Colonic mucosa (tissue), 4 donors: ENCODE measurements at regions of chr17 and their contacts with region 1.

Region 1: GRCh38 chr17:7296189-7296902 is 1.9 kb upstream of the YBX2 start:
- DNase-seq: peak; percentile 83
- H3K4me3 ChIP-seq: peak overlapping the region; percentile 6
- H3K27ac ChIP-seq: no peak overlapping the region
- H3K4me1 ChIP-seq: peaks cover 16% of the 10 kb centered on the region
- H3K27me3 ChIP-seq: peaks cover 4% of the 10 kb centered on the region
- CTCF ChIP-seq: peak; percentile 90

Region 2: DNA sequence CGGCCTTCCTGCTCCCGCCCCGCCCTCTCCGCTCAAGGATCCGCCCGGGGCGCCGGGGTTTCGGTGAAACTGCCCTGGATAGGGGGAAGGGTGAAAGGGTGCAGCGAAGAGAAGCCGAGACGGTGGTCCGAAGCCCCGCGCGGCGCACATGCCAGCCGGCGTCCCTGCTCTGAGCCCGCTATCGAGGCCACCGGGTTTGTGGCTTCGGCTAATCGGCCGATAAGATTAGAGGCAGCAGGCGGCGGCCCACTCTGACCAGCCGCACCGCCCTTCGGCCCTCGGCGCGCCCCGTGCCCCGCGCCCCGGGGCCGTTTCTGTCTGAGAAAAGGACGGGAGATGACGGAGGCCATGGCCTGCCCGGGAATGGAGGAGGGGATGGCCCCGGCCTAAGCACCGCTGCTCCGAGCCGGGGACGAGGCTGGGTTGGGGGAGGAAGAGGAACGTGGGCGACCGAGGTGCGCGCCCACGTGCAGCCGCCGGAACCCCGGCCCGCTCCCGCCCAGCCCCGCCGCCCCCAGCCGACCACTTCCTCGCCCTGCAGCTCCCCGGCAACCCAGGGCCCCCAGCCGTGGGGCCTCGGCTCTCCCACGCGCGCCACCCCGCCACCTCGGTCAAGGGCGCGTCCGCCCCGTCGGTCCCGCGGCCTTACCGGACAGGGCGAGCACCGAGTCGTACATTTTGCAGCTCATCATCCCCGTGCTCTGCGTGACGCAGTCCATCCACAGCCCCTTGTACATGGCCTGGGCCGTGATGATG is 35.0 kb before region 1 on chr17:
- intact Hi-C with region 1: loop called (anchors 5 kb)
- DNase-seq: peak; percentile 86
- H3K4me3 ChIP-seq: peak overlapping the region; percentile 77
- H3K27ac ChIP-seq: peak overlapping the region; percentile 93
- H3K4me1 ChIP-seq: no peaks in the 10 kb centered on the region
- H3K27me3 ChIP-seq: no peaks in the 10 kb centered on the region
- CTCF ChIP-seq: no peak

Region 3: DNA sequence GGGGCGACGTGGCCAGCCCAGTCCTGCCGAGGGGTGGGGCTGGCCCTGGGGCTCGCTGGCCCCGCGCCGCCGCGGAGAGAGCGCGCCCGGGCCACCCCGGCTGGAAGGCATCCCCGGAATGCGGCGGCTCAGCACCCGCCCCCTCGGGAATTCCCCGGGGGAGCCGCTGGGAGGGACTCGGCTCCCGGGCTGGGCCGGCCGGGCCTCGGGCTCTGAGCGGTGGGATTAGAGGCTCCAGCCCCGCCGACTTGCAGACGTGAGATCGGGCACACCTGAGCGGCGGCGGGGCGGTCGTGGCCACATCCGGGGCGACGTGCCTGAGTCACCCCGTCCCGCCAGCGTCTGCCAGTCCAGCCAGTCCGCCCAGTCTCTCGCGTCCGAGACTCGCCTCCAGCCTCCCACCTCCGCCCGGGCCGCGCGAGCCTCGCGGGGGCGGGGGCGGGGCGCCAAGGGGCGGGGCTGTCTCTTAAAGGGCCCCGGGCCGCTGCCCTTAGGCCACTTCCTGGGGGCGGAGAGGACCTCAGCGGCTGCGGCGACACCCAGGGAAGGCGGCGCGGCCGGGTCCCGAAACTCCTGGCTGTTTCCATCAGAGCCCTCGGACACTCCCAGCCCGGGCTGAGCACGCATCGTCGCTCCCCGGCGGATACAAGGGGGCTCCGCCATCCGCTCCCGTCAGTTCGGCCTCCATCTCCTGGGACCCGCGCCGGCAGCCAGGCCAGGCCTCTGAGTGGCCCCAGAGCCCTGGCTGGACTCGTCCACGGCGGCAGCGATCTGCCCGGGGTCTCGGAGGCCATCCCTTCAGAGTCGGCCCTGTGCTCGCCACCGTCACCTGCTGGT is 55.5 kb after region 1 on chr17 and contains the start of gene KCTD11:
- intact Hi-C with region 1: no loop called
- DNase-seq: peak; percentile 94
- H3K4me3 ChIP-seq: peak within 1 kb of the TSS; percentile 79
- H3K27ac ChIP-seq: peak within 1 kb of the TSS; percentile 99
- H3K4me1 ChIP-seq: peaks cover 14% of the 10 kb centered on the region
- H3K27me3 ChIP-seq: no peaks in the 10 kb centered on the region
- CTCF ChIP-seq: no peak
- total RNA-seq, gene KCTD11: 5.6 to 12.6 TPM

Region 4: GRCh38 chr17:7561028-7561575 is 264.8 kb after region 1 on chr17:
- intact Hi-C with region 1: no loop called
- DNase-seq: peak; percentile 97
- H3K4me3 ChIP-seq: peak overlapping the region; percentile 95
- H3K27ac ChIP-seq: peak overlapping the region; percentile 95
- H3K4me1 ChIP-seq: peaks cover 25% of the 10 kb centered on the region
- H3K27me3 ChIP-seq: no peaks in the 10 kb centered on the region
- CTCF ChIP-seq: peak; percentile 79